Cardiac septum (tissue), 1 donor: ENCODE measurements at regions of chr2 and their contacts with region 1.

Region 1: DNA sequence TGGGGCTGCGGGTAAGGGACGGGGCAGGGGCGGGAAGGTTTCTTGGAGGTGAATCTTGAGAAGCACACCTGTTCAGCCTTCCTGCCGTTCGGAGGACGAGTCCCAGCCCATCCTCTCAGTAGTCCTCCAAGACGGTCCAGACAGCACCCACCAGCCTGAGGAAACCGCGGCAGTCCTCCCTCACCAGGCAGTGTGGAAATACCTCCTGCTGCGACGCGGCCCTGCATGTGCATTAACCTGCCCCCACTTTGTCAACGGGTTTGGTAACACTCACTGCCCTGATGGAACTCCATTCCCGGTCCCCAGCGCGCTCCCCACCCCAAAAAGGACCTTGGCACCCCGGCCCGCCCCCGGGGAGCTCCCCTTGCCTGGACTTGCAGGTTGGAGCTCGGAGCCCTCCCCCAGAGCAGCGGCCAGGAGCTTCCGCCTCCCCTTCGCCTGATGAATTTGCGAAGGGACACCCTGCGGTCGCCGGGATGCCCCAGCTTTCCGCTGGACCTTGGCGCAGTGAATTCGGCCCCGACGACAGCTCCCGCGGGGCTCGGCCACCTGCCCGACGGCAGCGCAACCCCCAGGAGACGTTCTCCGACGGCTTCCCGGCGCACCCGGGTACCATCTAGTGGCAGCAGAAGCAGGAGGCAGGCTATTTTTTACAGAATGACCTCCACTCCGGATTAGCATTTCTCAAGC is 31.5 kb downstream of the ACVR1C start:
- DNase-seq: no peak

Region 2: GRCh38 chr2:157302492-157303099 is 294.5 kb before region 1 on chr2:
- intact Hi-C with region 1: loop called (anchors 10 kb)
- DNase-seq: no peak

Region 3: DNA sequence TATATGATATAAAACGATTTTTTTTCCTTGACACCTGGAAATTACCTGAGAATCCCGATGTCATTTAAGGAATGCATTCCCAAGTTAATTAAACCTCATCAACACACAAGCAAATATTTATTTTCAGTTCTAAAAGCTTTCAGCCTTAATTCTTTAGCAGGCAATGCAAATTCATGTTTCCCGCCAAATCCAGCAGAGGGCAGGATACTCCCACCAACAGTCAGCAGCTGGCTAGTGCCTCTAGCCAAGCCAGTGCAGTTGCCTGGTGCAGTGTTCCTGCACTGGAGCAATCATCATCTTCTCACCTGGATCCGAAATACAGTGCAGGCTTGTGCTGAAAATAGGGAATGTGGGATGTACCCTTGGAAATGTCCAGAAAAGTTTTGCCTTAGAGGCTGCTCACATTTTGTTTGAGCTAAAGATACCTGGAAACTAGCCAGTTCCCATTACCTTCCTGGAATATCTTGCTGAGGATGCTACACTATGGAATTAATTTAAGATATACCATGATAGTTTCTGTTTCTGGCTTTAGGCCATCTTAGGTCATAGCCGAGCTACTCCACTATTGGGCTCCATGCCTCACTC is 104.9 kb before region 1 on chr2:
- intact Hi-C with region 1: loop called (anchors 10 kb)
- DNase-seq: no peak

Region 4: GRCh38 chr2:157574165-157574564 is 23.0 kb before region 1 on chr2:
- intact Hi-C with region 1: no loop called
- DNase-seq: no peak